Common myeloid progenitor, CD34-positive (primary cell): ENCODE measurements at regions of chr11 and their contacts with region 1.

Region 1: GRCh38 chr11:11810764-11811726 is 30.7 kb upstream of the USP47 start:
- DNase-seq: no peak
- H3K4me3 ChIP-seq: no peak overlapping the region
- H3K27ac ChIP-seq: no peak overlapping the region
- H3K4me1 ChIP-seq: no peaks in the 10 kb centered on the region
- H3K27me3 ChIP-seq: no peaks in the 10 kb centered on the region

Region 2: DNA sequence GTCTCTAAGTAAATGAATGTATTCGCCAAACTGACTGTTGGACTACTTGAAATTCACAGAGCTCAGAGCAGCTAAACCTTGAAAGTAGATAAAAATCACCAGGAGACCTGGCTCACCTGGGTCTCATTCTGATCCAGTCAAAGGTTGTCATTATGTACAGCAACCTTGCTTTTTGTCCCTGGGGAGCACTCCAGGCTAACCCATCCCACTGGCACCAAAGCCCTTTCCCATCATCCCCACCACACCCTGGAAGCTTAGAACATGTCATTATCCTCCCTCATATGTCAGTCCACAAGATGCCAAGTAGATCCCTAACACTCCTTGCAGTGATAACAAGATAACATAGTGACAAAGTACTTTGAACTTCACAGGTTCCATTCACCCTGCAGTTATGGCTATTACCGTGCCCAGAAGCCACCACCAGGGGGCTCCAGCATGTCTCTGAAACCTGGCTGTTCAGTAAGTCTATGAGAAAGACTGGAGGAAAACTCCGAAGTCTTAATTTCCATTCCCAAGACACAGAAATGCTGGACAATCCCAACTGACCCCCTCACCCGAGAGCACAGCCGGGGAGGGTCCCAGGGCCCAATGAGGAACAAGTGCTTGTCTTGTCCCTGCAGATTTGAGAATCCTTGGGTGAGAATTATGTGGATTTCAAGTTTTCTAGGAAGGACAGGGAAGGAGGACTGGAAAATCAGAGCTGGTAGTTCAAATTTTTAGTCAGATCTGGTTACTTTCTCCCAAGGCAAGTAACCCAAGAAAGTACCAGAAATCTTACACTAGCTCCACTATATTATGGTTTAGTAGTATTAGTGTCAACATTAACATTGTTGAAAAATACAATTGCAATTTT is 12.2 kb before region 1 on chr11:
- CTCF ChIA-PET with region 1: interaction called, 15 read pairs
- POLR2A ChIA-PET with region 1: no interaction called
- DNase-seq: peak; percentile 64 to 69 (median 69)
- H3K4me3 ChIP-seq: no peak overlapping the region
- H3K27ac ChIP-seq: no peak overlapping the region
- H3K4me1 ChIP-seq: no peaks in the 10 kb centered on the region
- H3K27me3 ChIP-seq: peaks cover 0 to 7% (median 0%) of the 10 kb centered on the region in 5 experiments

Region 3: GRCh38 chr11:11826260-11826659 is 15.2 kb after region 1 on chr11:
- CTCF ChIA-PET with region 1: no interaction called
- POLR2A ChIA-PET with region 1: no interaction called
- DNase-seq: no peak
- H3K4me3 ChIP-seq: no peak overlapping the region
- H3K27ac ChIP-seq: no peak overlapping the region
- H3K4me1 ChIP-seq: no peaks in the 10 kb centered on the region
- H3K27me3 ChIP-seq: no peaks in the 10 kb centered on the region